Aorta (tissue), 5 donors: ENCODE measurements at regions of chr2 and their contacts with region 1.

Region 1: DNA sequence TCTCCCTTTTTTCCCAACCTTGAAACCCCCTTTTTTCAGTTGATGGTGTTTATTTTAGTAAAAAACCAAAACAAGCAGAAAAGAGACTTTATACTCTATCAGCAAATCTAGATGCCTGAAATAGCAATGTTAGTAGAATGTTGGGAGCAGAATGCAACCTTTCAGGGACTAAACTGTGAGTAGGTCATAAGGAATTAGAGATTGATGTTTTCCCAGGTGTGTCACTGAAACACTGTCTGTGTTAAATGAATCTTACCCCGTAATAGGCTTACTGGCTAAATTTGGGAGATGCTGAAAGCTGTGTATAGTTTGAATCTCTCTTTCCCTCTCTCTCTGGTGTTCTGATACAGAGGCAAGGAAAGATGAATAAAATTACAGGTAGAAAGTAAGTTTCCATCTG is 43.8 kb downstream of the AGFG1 start:
- DNase-seq: no peak
- ATAC-seq: no peak
- H3K4me3 ChIP-seq: no peak overlapping the region
- H3K27ac ChIP-seq: no peak overlapping the region
- H3K4me1 ChIP-seq: peaks cover 4 to 9% of the 10 kb centered on the region in 2 donors
- H3K27me3 ChIP-seq: no peaks in the 10 kb centered on the region

Region 2: DNA sequence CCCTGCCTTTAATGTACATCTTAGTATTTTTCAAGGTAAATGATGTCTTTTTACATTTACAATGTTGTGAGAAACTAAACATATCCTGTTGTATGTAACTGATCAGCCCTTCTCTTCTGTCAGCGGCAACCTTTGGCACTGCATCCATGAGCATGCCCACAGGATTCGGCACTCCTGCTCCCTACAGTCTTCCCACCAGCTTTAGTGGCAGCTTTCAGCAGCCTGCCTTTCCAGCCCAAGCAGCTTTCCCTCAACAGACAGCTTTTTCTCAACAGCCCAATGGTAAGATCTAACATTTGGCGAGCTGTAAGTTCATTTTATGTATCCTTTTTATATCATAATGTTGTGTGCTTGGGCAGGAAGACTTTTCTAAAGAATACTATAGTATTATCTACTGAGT is 36.1 kb after region 1 on chr2:
- intact Hi-C with region 1: loop called in 1 of 2 experiments (anchors 5 kb)
- DNase-seq: no peak
- ATAC-seq: no peak
- H3K4me3 ChIP-seq: no peak overlapping the region
- H3K27ac ChIP-seq: no peak overlapping the region
- H3K4me1 ChIP-seq: no peaks in the 10 kb centered on the region
- H3K27me3 ChIP-seq: no peaks in the 10 kb centered on the region